ENCODE measurements at regions of chr21 and their contacts with region 1.

Region 1: DNA sequence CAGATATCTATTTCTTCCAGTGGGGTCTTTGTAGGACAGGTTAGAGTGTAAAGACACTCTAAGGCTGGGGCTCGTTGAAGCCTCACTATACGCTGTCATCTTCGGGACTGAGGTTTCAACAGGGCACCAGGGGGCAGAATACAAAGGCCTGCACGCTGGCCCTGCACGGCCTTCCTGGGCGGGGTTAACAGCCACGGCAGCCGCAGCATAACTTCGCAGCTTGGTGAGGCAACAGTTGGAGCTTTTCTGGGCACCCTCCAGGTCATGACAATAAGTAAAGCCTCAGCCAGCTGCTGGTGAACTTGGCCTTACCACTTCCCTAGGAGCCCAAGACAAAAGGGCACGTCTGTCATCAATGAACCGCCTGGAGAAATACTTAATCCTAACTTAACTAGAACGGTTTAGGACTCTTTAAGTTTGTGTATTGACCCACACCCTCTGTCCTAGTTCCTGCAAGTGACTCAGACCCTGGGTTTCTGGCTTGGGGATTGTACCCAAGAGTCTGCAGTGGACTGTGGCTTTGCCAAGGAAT is 2.3 kb upstream of the RUNX1 start:
- DNase-seq: peak; percentile 95
- H3K4me3 Mint-ChIP-seq: no peak overlapping the region
- H3K27ac Mint-ChIP-seq: peak overlapping the region; percentile 83
- H3K4me1 Mint-ChIP-seq: peaks cover 48% of the 10 kb centered on the region
- H3K27me3 Mint-ChIP-seq: no peaks in the 10 kb centered on the region
- CTCF ChIP-seq: peak; percentile 73

Region 2: GRCh38 chr21:34745557-34746255 is 305.6 kb before region 1 on chr21:
- CTCF ChIA-PET with region 1: interaction called, 5 read pairs
- POLR2A ChIA-PET with region 1: interaction called, 6 read pairs
- intact Hi-C with region 1: loop called (anchors 2 kb)
- DNase-seq: peak; percentile 83
- H3K4me3 Mint-ChIP-seq: no peak overlapping the region
- H3K27ac Mint-ChIP-seq: no peak overlapping the region
- H3K4me1 Mint-ChIP-seq: peaks cover 26% of the 10 kb centered on the region
- H3K27me3 Mint-ChIP-seq: no peaks in the 10 kb centered on the region
- CTCF ChIP-seq: peak; percentile 95

Region 3: GRCh38 chr21:34881894-34882371 is 169.4 kb before region 1 on chr21:
- CTCF ChIA-PET with region 1: interaction called, 3 read pairs
- POLR2A ChIA-PET with region 1: interaction called, 10 read pairs
- intact Hi-C with region 1: no loop called
- DNase-seq: peak; percentile 71
- H3K4me3 Mint-ChIP-seq: peak overlapping the region; percentile 99
- H3K27ac Mint-ChIP-seq: peak overlapping the region; percentile 91
- H3K4me1 Mint-ChIP-seq: peaks cover 48% of the 10 kb centered on the region
- H3K27me3 Mint-ChIP-seq: no peaks in the 10 kb centered on the region
- CTCF ChIP-seq: no peak

Region 4: GRCh38 chr21:34933609-34934335 is 117.6 kb before region 1 on chr21:
- CTCF ChIA-PET with region 1: interaction called, 10 read pairs
- POLR2A ChIA-PET with region 1: no interaction called
- intact Hi-C with region 1: no loop called
- DNase-seq: no peak
- H3K4me3 Mint-ChIP-seq: no peak overlapping the region
- H3K27ac Mint-ChIP-seq: no peak overlapping the region
- H3K4me1 Mint-ChIP-seq: peaks cover 43% of the 10 kb centered on the region
- H3K27me3 Mint-ChIP-seq: no peaks in the 10 kb centered on the region
- CTCF ChIP-seq: no peak

Region 5: GRCh38 chr21:35256467-35256988 is 205.2 kb after region 1 on chr21:
- CTCF ChIA-PET with region 1: interaction called, 10 read pairs
- POLR2A ChIA-PET with region 1: interaction called, 25 read pairs
- intact Hi-C with region 1: loop called (anchors 1 kb)
- DNase-seq: peak; percentile 99
- H3K4me3 Mint-ChIP-seq: peak overlapping the region; percentile 66
- H3K27ac Mint-ChIP-seq: peak overlapping the region; percentile 89
- H3K4me1 Mint-ChIP-seq: peaks cover 48% of the 10 kb centered on the region
- H3K27me3 Mint-ChIP-seq: no peaks in the 10 kb centered on the region
- CTCF ChIP-seq: no peak

Region 6: GRCh38 chr21:35400233-35400957 is 349.0 kb after region 1 on chr21:
- CTCF ChIA-PET with region 1: interaction called, 13 read pairs
- POLR2A ChIA-PET with region 1: interaction called, 12 read pairs
- intact Hi-C with region 1: loop called (anchors 1 kb)
- DNase-seq: peak; percentile 74
- H3K4me3 Mint-ChIP-seq: no peak overlapping the region
- H3K27ac Mint-ChIP-seq: peak overlapping the region; percentile 10
- H3K4me1 Mint-ChIP-seq: peaks cover 17% of the 10 kb centered on the region
- H3K27me3 Mint-ChIP-seq: no peaks in the 10 kb centered on the region
- CTCF ChIP-seq: peak; percentile 65

Region 7: GRCh38 chr21:35840197-35840799 is 788.9 kb after region 1 on chr21:
- CTCF ChIA-PET with region 1: interaction called, 10 read pairs
- POLR2A ChIA-PET with region 1: no interaction called
- intact Hi-C with region 1: loop called (anchors 2 kb)
- DNase-seq: peak; percentile 72
- H3K4me3 Mint-ChIP-seq: no peak overlapping the region
- H3K27ac Mint-ChIP-seq: no peak overlapping the region
- H3K4me1 Mint-ChIP-seq: no peaks in the 10 kb centered on the region
- H3K27me3 Mint-ChIP-seq: no peaks in the 10 kb centered on the region
- CTCF ChIP-seq: peak; percentile 78